CD8-positive, alpha-beta T cell (primary cell): ENCODE measurements at regions of chr11 and their contacts with region 1.

Region 1: GRCh38 chr11:81644239-81644840 is 1089.3 kb downstream of the FAM181B start:
- DNase-seq: peak in 3 of 9 experiments; percentile 7 to 56 (median 38)
- ATAC-seq: peak; percentile 65
- H3K4me3 ChIP-seq: no peak overlapping the region
- H3K4me3 Mint-ChIP-seq: no peak overlapping the region
- H3K27ac ChIP-seq: no peak overlapping the region
- H3K27ac Mint-ChIP-seq: no peak overlapping the region
- H3K4me1 ChIP-seq: no peaks in the 10 kb centered on the region
- H3K4me1 Mint-ChIP-seq: no peaks in the 10 kb centered on the region
- H3K27me3 ChIP-seq: no peaks in the 10 kb centered on the region
- H3K27me3 Mint-ChIP-seq: peaks cover 4% of the 10 kb centered on the region
- CTCF ChIP-seq: peak; percentile 88

Region 2: GRCh38 chr11:81220146-81220895 is 424.0 kb before region 1 on chr11:
- CTCF ChIA-PET with region 1: no interaction called
- POLR2A ChIA-PET with region 1: no interaction called
- intact Hi-C with region 1: no loop called
- DNase-seq: no peak
- ATAC-seq: no peak
- H3K4me3 ChIP-seq: no peak overlapping the region
- H3K4me3 Mint-ChIP-seq: no peak overlapping the region
- H3K27ac ChIP-seq: no peak overlapping the region
- H3K27ac Mint-ChIP-seq: no peak overlapping the region
- H3K4me1 ChIP-seq: no peaks in the 10 kb centered on the region
- H3K4me1 Mint-ChIP-seq: no peaks in the 10 kb centered on the region
- H3K27me3 ChIP-seq: no peaks in the 10 kb centered on the region
- H3K27me3 Mint-ChIP-seq: no peaks in the 10 kb centered on the region
- CTCF ChIP-seq: no peak

Region 3: DNA sequence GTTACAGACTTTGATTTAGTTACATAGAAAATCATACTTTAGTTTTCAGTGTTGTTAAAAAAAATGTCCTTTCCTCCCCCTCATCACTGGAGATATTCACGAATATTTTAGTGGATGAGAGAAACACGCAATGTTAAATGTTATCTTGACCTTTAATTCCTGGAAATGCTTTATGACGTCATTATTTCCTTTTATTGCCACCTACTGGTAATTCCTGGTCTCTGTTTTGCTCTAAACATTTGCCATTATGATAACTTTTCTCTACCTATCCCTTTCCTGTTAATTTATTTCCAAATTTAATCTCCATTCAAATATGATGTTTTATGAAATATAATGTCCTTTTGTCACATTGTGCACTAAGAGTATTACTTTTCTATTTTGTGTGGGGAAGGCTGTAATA is 318.7 kb after region 1 on chr11:
- CTCF ChIA-PET with region 1: no interaction called
- POLR2A ChIA-PET with region 1: no interaction called
- intact Hi-C with region 1: loop called in 1 of 2 experiments (anchors 5 kb)
- DNase-seq: peak in 2 of 9 experiments; percentile 28 to 42
- ATAC-seq: no peak
- H3K4me3 ChIP-seq: no peak overlapping the region
- H3K4me3 Mint-ChIP-seq: no peak overlapping the region
- H3K27ac ChIP-seq: no peak overlapping the region
- H3K27ac Mint-ChIP-seq: no peak overlapping the region
- H3K4me1 ChIP-seq: peaks cover 7% of the 10 kb centered on the region
- H3K4me1 Mint-ChIP-seq: peaks cover 13% of the 10 kb centered on the region
- H3K27me3 ChIP-seq: no peaks in the 10 kb centered on the region
- H3K27me3 Mint-ChIP-seq: no peaks in the 10 kb centered on the region
- CTCF ChIP-seq: no peak

Region 4: DNA sequence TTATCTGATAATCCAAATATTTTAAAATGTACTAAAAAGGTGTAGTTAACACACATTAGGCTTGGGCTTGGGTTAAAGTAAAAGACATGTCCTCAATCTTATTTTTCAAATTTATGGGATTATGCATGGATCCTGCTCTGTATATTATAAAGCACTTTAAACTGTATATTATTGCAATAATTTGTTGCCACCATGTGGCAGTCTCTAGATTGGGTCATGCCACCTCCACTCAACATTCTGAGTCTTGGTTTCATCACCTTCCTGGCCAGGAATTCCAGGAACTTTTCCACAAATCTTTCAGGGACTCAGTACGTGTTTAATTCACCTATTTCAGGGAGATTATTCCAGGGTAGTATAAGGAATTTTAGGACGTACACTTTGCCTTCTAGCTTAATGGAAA is 393.8 kb after region 1 on chr11:
- CTCF ChIA-PET with region 1: no interaction called
- POLR2A ChIA-PET with region 1: no interaction called
- intact Hi-C with region 1: loop called in 1 of 2 experiments (anchors 5 kb)
- DNase-seq: peak in 2 of 9 experiments; percentile 3 to 6
- ATAC-seq: no peak
- H3K4me3 ChIP-seq: no peak overlapping the region
- H3K4me3 Mint-ChIP-seq: no peak overlapping the region
- H3K27ac ChIP-seq: no peak overlapping the region
- H3K27ac Mint-ChIP-seq: no peak overlapping the region
- H3K4me1 ChIP-seq: no peaks in the 10 kb centered on the region
- H3K4me1 Mint-ChIP-seq: no peaks in the 10 kb centered on the region
- H3K27me3 ChIP-seq: no peaks in the 10 kb centered on the region
- H3K27me3 Mint-ChIP-seq: no peaks in the 10 kb centered on the region
- CTCF ChIP-seq: no peak

Region 5: GRCh38 chr11:82229341-82229740 is 585.0 kb after region 1 on chr11:
- CTCF ChIA-PET with region 1: interaction called, 4 read pairs
- POLR2A ChIA-PET with region 1: no interaction called
- intact Hi-C with region 1: loop called (anchors 1 kb)
- DNase-seq: peak in 2 of 9 experiments; percentile 24 to 42
- ATAC-seq: no peak
- H3K4me3 ChIP-seq: no peak overlapping the region
- H3K4me3 Mint-ChIP-seq: no peak overlapping the region
- H3K27ac ChIP-seq: no peak overlapping the region
- H3K27ac Mint-ChIP-seq: no peak overlapping the region
- H3K4me1 ChIP-seq: no peaks in the 10 kb centered on the region
- H3K4me1 Mint-ChIP-seq: no peaks in the 10 kb centered on the region
- H3K27me3 ChIP-seq: no peaks in the 10 kb centered on the region
- H3K27me3 Mint-ChIP-seq: peaks cover 3% of the 10 kb centered on the region
- CTCF ChIP-seq: no peak

Region 6: GRCh38 chr11:82701847-82702520 is 1057.6 kb after region 1 on chr11:
- CTCF ChIA-PET with region 1: no interaction called
- POLR2A ChIA-PET with region 1: no interaction called
- intact Hi-C with region 1: loop called (anchors 2 to 5 kb)
- DNase-seq: peak in 2 of 9 experiments; percentile 6 to 20
- ATAC-seq: no peak
- H3K4me3 ChIP-seq: no peak overlapping the region
- H3K4me3 Mint-ChIP-seq: no peak overlapping the region
- H3K27ac ChIP-seq: no peak overlapping the region
- H3K27ac Mint-ChIP-seq: no peak overlapping the region
- H3K4me1 ChIP-seq: no peaks in the 10 kb centered on the region
- H3K4me1 Mint-ChIP-seq: no peaks in the 10 kb centered on the region
- H3K27me3 ChIP-seq: peaks cover 0 to 3% of the 10 kb centered on the region in 2 experiments
- H3K27me3 Mint-ChIP-seq: peaks cover 17% of the 10 kb centered on the region
- CTCF ChIP-seq: peak; percentile 56